ENCODE measurements at regions of chr15 and their contacts with region 1.

Region 1: GRCh38 chr15:68252925-68253534 is 23.5 kb upstream of the CLN6 start:
- DNase-seq: peak; percentile 76
- H3K4me3 ChIP-seq: no peak overlapping the region
- H3K27ac ChIP-seq: no peak overlapping the region
- H3K4me1 ChIP-seq: peaks cover 19% of the 10 kb centered on the region
- H3K27me3 ChIP-seq: no peaks in the 10 kb centered on the region
- CTCF ChIP-seq: peak; percentile 84 to 96

Region 2: GRCh38 chr15:68277603-68278344 is 24.7 kb after region 1 on chr15 and contains the start of gene FEM1B:
- CTCF ChIA-PET with region 1: interaction called, 3 read pairs
- dilution Hi-C with region 1: no loop called
- in situ Hi-C with region 1: no loop called
- intact Hi-C with region 1: loop called (anchors 1 kb)
- DNase-seq: peak; percentile 95
- H3K4me3 ChIP-seq: peak within 1 kb of the TSS; percentile 83 to 98 (median 88)
- H3K27ac ChIP-seq: peak within 1 kb of the TSS; percentile 96
- H3K4me1 ChIP-seq: peaks cover 42% of the 10 kb centered on the region
- H3K27me3 ChIP-seq: no peaks in the 10 kb centered on the region
- CTCF ChIP-seq: no peak
- total RNA-seq, gene FEM1B: 86.6 to 105 TPM

Region 3: GRCh38 chr15:68372291-68372811 is 119.3 kb after region 1 on chr15:
- CTCF ChIA-PET with region 1: no interaction called
- dilution Hi-C with region 1: no loop called
- in situ Hi-C with region 1: loop called in 1 of 2 experiments (anchors 25 kb)
- intact Hi-C with region 1: loop called (anchors 1 kb)
- DNase-seq: peak; percentile 20
- H3K4me3 ChIP-seq: no peak overlapping the region
- H3K27ac ChIP-seq: no peak overlapping the region
- H3K4me1 ChIP-seq: no peaks in the 10 kb centered on the region
- H3K27me3 ChIP-seq: no peaks in the 10 kb centered on the region
- CTCF ChIP-seq: peak; percentile 51 to 67

Region 4: GRCh38 chr15:68536331-68537095 is 283.5 kb after region 1 on chr15:
- CTCF ChIA-PET with region 1: no interaction called
- dilution Hi-C with region 1: no loop called
- in situ Hi-C with region 1: no loop called
- intact Hi-C with region 1: loop called (anchors 5 kb)
- DNase-seq: peak; percentile 34
- H3K4me3 ChIP-seq: no peak overlapping the region
- H3K27ac ChIP-seq: no peak overlapping the region
- H3K4me1 ChIP-seq: peaks cover 8% of the 10 kb centered on the region
- H3K27me3 ChIP-seq: no peaks in the 10 kb centered on the region
- CTCF ChIP-seq: no peak

Region 5: DNA sequence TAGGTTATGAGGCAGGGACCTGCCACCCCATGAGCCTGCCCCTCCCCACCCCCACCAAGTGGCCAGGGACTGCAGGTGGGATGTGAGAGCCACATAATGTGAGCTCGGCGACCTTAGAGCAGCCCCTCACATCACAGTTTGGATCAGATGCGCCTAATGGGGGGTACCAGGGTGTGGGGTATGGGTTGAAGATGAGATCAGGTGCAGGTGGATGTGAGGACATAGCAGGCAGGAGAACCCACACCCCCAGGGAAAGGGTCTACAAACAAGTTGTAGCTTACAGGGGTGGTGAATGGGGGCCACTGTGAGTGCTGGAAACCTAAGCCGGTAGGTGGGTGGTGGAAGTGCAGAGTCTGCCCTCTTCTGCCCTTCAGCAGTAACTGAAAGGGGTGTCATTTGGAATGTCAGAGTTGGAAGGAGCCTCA is 419.8 kb after region 1 on chr15:
- CTCF ChIA-PET with region 1: no interaction called
- dilution Hi-C with region 1: no loop called
- in situ Hi-C with region 1: no loop called
- intact Hi-C with region 1: loop called (anchors 5 kb)
- DNase-seq: no peak
- H3K4me3 ChIP-seq: no peak overlapping the region
- H3K27ac ChIP-seq: no peak overlapping the region
- H3K4me1 ChIP-seq: peaks cover 14% of the 10 kb centered on the region
- H3K27me3 ChIP-seq: no peaks in the 10 kb centered on the region
- CTCF ChIP-seq: peak; percentile 22 to 36